ENCODE measurements at regions of chr12 and their contacts with region 1.

Region 1: DNA sequence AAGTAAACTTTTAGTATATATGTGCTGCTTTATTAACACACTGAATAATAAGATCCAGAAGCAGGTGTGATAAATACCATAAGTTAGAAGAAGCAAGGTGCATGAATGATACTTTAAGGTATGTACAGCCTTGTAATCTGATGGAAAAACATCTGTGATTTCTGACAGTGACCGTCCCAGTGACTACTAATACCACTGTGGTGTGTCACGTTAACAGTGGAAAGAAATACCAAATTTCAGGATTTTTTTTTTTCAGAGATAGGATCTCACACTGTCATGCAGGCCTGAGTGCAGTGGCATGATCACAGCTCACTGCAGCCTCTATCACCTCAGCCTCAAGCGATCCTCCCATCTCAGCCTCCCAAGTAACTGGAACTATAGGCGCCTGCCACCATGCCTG is 21.5 kb downstream of the SDS start:
- DNase-seq: no peak
- ATAC-seq: no peak
- H3K4me3 ChIP-seq: no peak overlapping the region
- H3K27ac ChIP-seq: no peak overlapping the region
- H3K4me1 ChIP-seq: peaks cover 5 to 22% of the 10 kb centered on the region in 2 experiments; a peak in 4 of 5 replicates
- H3K27me3 ChIP-seq: no peaks in the 10 kb centered on the region
- CTCF ChIP-seq: no peak
- EP300 ChIP-seq: no peak
- POLR2A ChIP-seq: no peak
- RAD21 ChIP-seq: no peak

Region 2: GRCh38 chr12:113086249-113087164 is 295.7 kb before region 1 on chr12:
- CTCF ChIA-PET with region 1: no interaction called
- POLR2A ChIA-PET with region 1: no interaction called
- in situ Hi-C with region 1: no loop called
- intact Hi-C with region 1: no loop called
- DNase-seq: no peak
- ATAC-seq: no peak
- H3K4me3 ChIP-seq: no peak overlapping the region
- H3K27ac ChIP-seq: no peak overlapping the region
- H3K4me1 ChIP-seq: peaks cover 0 to 16% of the 10 kb centered on the region in 2 experiments; a peak in 3 of 5 replicates
- H3K27me3 ChIP-seq: peaks cover 3 to 37% of the 10 kb centered on the region in 2 experiments
- CTCF ChIP-seq: no peak
- EP300 ChIP-seq: no peak
- POLR2A ChIP-seq: no peak
- RAD21 ChIP-seq: no peak

Region 3: DNA sequence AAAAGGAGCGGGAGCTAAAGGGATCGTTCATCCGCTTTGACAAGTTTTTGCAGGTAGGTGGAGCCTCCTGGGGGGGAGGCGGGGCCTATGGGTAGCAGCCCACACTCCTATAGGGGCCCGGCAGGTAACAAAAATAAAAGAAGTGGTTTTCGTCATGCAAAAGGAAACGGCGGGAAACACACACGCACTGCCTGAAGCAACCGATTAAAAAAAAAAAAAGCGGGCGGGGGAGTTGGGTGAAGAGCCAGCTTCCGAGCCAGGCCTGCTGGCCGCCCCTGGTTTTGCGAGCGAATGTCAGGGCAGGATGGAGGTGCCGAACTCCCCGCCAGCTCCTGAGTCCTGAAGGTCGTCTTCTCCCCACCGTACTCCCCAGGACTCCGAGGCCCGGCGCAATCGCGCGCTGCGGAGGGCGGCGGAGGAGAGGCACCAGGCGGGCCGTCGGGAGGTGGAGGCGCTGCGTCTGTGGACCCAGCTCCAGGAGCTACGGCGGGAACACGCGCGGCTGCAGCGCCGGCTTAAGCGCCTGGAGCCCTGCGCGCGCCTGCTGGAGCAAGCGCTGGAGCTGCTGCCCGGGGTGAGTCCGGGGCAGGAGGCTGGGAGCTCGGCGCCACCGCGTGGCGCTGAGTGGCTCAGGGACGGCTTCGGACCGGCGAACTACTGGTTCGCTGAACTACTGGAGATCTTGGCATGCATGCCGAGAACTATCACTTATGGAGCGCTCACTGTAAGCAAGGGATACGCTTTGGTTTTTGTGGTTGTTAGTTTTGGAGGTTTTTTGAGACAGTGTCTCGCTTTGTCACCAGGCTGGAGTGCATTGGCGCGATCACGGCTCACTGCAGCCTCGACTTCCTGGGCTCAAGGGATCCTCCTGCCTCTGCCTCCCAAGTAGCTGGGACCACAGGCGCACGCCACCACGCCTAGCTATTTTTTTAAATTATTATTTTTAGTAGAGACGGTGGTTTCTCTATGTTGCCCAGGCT is 229.1 kb before region 1 on chr12:
- CTCF ChIA-PET with region 1: no interaction called
- POLR2A ChIA-PET with region 1: no interaction called
- in situ Hi-C with region 1: no loop called
- intact Hi-C with region 1: no loop called
- DNase-seq: peak; percentile 75 to 84 (median 80)
- ATAC-seq: peak; percentile 95
- H3K4me3 ChIP-seq: peak overlapping the region; percentile 42
- H3K27ac ChIP-seq: no peak overlapping the region
- H3K4me1 ChIP-seq: peaks cover 5 to 29% of the 10 kb centered on the region in 2 experiments; a peak in 3 of 5 replicates
- H3K27me3 ChIP-seq: peaks cover 18 to 32% of the 10 kb centered on the region in 2 experiments
- CTCF ChIP-seq: peak; percentile 67 to 75 (median 73)
- EP300 ChIP-seq: no peak
- POLR2A ChIP-seq: no peak
- RAD21 ChIP-seq: peak; percentile 51 to 82

Region 4: DNA sequence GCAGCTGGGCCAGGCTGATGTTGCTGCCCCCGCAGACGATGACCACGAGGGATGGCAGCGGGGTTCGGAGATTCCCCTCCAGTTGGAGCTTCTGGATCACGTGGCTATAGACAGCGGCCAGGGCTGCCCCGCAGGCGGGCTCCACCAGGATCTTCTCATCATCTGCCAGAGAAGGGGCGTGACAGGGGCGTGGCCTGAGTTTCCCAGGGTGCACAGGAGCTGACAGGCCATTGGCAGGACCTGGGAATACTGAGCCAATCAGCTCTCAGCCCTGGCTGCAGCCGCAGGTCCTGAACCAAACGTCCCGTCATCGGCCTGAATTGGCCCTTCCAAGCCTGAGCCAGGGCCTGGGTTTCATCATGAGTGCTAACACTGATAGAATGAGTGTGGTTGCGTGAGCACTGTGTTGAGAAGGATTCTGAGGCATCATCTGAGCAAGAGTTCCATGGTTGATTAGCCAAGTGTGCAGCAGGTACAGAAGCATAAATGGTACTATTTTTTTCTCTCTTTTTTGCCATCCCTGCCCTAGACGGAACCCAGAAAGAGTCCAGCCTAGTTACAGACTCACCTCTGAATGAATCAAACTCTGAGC is 10.9 kb after region 1 on chr12:
- CTCF ChIA-PET with region 1: no interaction called
- POLR2A ChIA-PET with region 1: interaction called, 11 read pairs
- in situ Hi-C with region 1: no loop called
- intact Hi-C with region 1: no loop called
- DNase-seq: peak; percentile 89 to 98 (median 96)
- ATAC-seq: peak; percentile 100
- H3K4me3 ChIP-seq: no peak overlapping the region
- H3K27ac ChIP-seq: no peak overlapping the region
- H3K4me1 ChIP-seq: peaks cover 0 to 11% of the 10 kb centered on the region in 2 experiments; a peak in 2 of 5 replicates
- H3K27me3 ChIP-seq: no peaks in the 10 kb centered on the region
- CTCF ChIP-seq: no peak
- EP300 ChIP-seq: no peak
- POLR2A ChIP-seq: no peak
- RAD21 ChIP-seq: no peak